ENCODE measurements at regions of chr13 and their contacts with region 1.

Region 1: GRCh38 chr13:40946485-40946884 is 72.6 kb downstream of the ELF1 start:
- DNase-seq: no peak
- H3K4me3 ChIP-seq: no peak overlapping the region
- H3K27ac ChIP-seq: no peak overlapping the region
- H3K4me1 ChIP-seq: peaks cover 0 to 4% (median 2%) of the 10 kb centered on the region in 4 experiments
- H3K27me3 ChIP-seq: no peaks in the 10 kb centered on the region

Region 2: DNA sequence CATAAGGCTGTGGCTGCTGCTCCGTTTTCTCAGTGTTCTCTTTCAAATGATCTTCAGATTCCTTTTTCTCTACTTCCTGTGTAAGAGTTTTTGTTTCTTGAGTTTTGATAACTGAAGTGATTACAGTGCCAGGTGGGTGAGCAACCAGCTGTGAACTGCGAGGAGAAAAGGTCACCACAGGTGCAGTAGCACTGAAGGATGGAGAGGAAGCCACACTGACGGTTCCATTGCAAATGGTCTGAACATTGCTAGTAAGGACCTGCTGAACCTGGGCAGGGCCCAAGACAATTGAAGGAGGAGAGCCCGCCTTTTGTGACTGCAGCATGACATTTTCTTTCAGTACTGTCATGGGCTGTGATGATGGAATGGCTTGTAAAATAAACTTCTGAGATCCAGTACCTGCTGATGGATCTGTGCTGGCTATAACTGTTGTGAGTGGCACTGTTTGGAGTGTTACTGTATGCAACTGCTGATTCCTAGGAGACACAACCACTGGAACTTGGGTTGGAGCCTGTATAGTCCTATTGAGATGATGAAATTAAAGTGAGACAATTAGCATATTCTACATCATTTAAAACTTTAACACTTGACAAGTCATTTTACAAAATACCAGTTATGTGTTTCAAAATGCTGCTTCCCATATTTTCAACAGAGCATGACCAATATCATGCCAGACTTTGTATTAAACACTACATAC is 12.8 kb before region 1 on chr13:
- CTCF ChIA-PET with region 1: interaction called, 14 read pairs
- POLR2A ChIA-PET with region 1: interaction called, 4 read pairs
- DNase-seq: no peak
- H3K4me3 ChIP-seq: no peak overlapping the region
- H3K27ac ChIP-seq: peak overlapping the region in 1 of 2 experiments; percentile 43
- H3K4me1 ChIP-seq: no peaks in the 10 kb centered on the region
- H3K27me3 ChIP-seq: no peaks in the 10 kb centered on the region

Measured in common myeloid progenitor, CD34-positive (primary cell).